ENCODE measurements at regions of chr3 and their contacts with region 1.

Region 1: DNA sequence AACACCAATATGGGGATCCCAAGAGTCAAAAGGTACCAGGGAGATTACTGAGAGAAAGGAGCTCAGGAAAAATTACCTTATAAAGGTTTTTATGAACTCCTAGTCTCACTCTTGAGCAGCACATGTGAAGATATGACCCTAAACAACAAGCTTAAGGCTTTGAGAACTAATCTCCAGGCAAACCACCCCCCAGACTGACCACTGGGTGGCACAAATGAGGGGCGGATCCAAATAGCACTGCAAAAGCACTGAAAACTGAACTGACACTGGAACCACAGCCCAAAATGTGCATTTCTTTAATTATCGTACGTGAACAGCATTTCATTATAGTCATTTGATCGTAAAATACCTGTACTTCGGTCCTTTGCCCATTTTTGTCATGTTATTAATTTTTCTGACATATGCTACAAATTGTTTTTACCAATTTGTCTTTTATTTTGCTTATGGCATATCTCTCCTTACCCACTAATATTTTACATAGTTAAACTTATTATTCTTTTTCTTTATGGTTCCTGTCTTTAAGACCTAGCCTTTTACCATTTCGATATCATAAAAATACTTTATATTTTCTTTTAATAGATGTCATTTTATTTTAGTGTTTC is 31.5 kb upstream of the TFDP2 start:
- DNase-seq: peak in 1 of 2 experiments; percentile 54
- H3K4me3 ChIP-seq: no peak overlapping the region
- H3K27ac ChIP-seq: no peak overlapping the region
- H3K4me1 ChIP-seq: no peaks in the 10 kb centered on the region
- H3K27me3 ChIP-seq: no peaks in the 10 kb centered on the region
- CTCF ChIP-seq: peak; percentile 61 to 79 (median 70)
- EP300 ChIP-seq: no peak
- POLR2A ChIP-seq: no peak
- RAD21 ChIP-seq: peak; percentile 62 to 68

Region 2: GRCh38 chr3:142129516-142130171 is 51.2 kb before region 1 on chr3:
- CTCF ChIA-PET with region 1: interaction called, 15 read pairs
- POLR2A ChIA-PET with region 1: no interaction called
- DNase-seq: no peak
- H3K4me3 ChIP-seq: no peak overlapping the region
- H3K27ac ChIP-seq: no peak overlapping the region
- H3K4me1 ChIP-seq: no peaks in the 10 kb centered on the region
- H3K27me3 ChIP-seq: no peaks in the 10 kb centered on the region
- CTCF ChIP-seq: peak in 1 of 3 experiments; percentile 15; a peak in 1 of 4 replicates
- EP300 ChIP-seq: no peak
- POLR2A ChIP-seq: no peak
- RAD21 ChIP-seq: no peak

Region 3: GRCh38 chr3:142165194-142165593 is 15.7 kb before region 1 on chr3:
- CTCF ChIA-PET with region 1: interaction called, 13 read pairs
- POLR2A ChIA-PET with region 1: no interaction called
- DNase-seq: no peak
- H3K4me3 ChIP-seq: no peak overlapping the region
- H3K27ac ChIP-seq: no peak overlapping the region
- H3K4me1 ChIP-seq: peaks cover 4 to 12% (median 10%) of the 10 kb centered on the region in 4 experiments; a peak in 5 of 7 replicates
- H3K27me3 ChIP-seq: no peaks in the 10 kb centered on the region
- CTCF ChIP-seq: no peak
- EP300 ChIP-seq: no peak
- POLR2A ChIP-seq: no peak
- RAD21 ChIP-seq: no peak

Region 4: DNA sequence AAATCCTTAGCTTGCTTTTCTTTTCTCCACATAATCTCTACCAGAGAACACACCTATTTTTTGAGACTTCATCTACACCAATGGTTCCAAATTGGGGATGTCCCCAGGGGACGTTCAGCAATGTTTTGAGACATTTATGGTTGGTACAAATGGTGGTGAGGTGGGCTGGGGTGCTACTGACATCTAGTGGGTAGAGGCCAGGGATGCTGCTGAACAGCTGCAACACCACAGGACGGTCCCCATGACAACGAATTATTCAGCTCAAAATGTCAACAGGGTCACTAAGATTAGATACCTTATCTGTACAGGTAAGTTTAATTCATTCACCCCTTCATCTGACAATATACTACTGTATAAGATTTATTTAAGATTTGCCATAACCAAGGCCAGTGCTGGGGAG is 30.2 kb after region 1 on chr3:
- CTCF ChIA-PET with region 1: interaction called, 26 read pairs
- POLR2A ChIA-PET with region 1: no interaction called
- DNase-seq: no peak
- H3K4me3 ChIP-seq: no peak overlapping the region
- H3K27ac ChIP-seq: no peak overlapping the region
- H3K4me1 ChIP-seq: peaks cover 0 to under 1% (median 0%) of the 10 kb centered on the region in 4 experiments; a peak in 2 of 7 replicates
- H3K27me3 ChIP-seq: no peaks in the 10 kb centered on the region
- CTCF ChIP-seq: peak; percentile 63 to 81 (median 77)
- EP300 ChIP-seq: no peak
- POLR2A ChIP-seq: no peak
- RAD21 ChIP-seq: peak; percentile 81 to 83

Measured in H1 (cell line).